ENCODE measurements at regions of chr13 and their contacts with region 1.

Region 1: DNA sequence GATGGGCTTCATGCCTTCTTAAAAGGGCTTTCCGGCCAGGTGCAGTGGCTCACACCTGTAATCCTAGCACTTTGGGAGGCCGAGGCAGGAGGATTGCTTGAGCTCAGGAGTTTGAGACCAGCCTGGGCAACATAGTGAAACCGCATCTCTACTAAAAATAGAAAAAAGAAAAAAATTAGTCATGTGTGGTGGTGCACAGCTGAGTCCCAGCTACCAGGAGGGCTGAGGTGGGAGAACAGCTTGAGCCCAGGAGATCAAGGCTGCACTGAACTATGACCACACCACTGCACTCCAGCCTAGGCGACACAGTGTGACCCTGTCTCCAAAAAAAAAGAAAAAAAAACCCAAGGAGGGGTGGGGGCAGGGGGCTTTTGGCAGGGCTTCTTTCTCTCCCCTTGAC is 7.2 kb downstream of the CARS2 start:
- H3K4me3 Mint-ChIP-seq: no peak overlapping the region
- H3K27ac Mint-ChIP-seq: peak overlapping the region; percentile 70
- H3K4me1 Mint-ChIP-seq: peaks cover 55% of the 10 kb centered on the region
- H3K27me3 Mint-ChIP-seq: no peaks in the 10 kb centered on the region

Region 2: DNA sequence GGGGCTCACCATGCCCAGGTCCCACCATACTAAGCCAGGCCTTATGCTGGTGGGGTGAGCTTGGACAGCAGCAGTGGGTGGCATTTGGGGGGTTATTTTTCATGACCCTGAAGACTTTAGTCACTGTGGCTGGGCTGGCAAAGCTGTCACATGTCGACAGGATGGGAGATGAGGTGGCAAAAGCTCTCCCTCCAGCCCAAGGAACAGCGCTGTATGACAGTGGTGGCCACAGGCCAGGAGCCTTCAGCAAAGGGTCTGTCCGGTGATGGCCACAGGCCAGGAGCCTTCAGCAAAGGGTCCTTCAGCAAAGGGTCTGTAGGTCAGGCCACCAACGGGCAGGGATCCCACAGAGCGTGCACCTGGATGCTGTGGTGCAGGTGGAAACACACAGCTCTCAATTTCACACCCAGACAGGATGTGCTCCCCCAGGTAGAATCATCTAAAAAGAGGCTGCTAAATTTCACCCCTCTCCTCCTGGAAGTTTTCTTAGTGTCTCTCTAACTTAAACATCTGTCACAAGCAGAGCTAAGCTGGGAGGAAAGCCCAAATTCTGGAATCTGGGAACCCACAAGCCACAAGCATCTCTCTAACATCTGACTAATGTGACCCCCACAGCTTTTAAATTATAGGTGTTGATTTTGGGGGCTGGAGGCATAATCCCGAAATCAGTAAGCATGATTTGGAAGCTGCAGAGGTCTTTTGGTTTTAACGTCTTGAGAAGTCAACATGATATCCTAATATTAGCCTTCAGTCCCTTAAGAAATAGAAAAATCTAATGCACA is 414.8 kb before region 1 on chr13:
- intact Hi-C with region 1: no loop called
- H3K4me3 Mint-ChIP-seq: no peak overlapping the region
- H3K27ac Mint-ChIP-seq: no peak overlapping the region
- H3K4me1 Mint-ChIP-seq: no peaks in the 10 kb centered on the region
- H3K27me3 Mint-ChIP-seq: peaks cover 5% of the 10 kb centered on the region

Region 3: GRCh38 chr13:110657196-110657595 is 41.5 kb before region 1 on chr13:
- intact Hi-C with region 1: loop called (anchors 5 kb)
- H3K4me3 Mint-ChIP-seq: no peak overlapping the region
- H3K27ac Mint-ChIP-seq: no peak overlapping the region
- H3K4me1 Mint-ChIP-seq: peaks cover 43% of the 10 kb centered on the region
- H3K27me3 Mint-ChIP-seq: no peaks in the 10 kb centered on the region

Region 4: DNA sequence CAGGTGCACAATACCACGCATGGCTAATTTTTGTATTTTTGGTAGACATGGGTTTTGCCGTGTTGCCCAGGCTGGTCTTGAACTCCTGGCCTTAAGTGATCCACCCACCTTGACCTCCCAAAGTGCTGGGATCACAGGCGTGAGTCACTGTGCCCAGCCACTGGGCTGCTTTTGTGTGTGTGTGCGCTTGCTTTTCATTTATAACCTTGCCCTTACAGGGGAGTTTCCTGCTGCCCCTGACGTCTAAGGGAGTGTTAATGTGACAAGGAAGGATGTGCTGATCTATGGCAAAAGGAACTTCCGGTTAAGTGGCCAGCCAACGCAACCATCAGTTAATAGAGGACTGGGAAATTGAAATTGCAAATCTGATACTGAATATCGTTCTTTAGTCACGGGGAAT is 72.5 kb after region 1 on chr13:
- intact Hi-C with region 1: no loop called
- H3K4me3 Mint-ChIP-seq: no peak overlapping the region
- H3K27ac Mint-ChIP-seq: no peak overlapping the region
- H3K4me1 Mint-ChIP-seq: no peaks in the 10 kb centered on the region
- H3K27me3 Mint-ChIP-seq: peaks cover 17% of the 10 kb centered on the region

Measured in dendritic cell treated with granulocyte-macrophage colony-stimulating factor and Interleukin-4, amounts not matched to agents 40 ng/mL and 50 ng/mL, for 4 days (primary cell).